Heart right ventricle (tissue), 16 donors: ENCODE measurements at regions of chr17 and their contacts with region 1.

Region 1: DNA sequence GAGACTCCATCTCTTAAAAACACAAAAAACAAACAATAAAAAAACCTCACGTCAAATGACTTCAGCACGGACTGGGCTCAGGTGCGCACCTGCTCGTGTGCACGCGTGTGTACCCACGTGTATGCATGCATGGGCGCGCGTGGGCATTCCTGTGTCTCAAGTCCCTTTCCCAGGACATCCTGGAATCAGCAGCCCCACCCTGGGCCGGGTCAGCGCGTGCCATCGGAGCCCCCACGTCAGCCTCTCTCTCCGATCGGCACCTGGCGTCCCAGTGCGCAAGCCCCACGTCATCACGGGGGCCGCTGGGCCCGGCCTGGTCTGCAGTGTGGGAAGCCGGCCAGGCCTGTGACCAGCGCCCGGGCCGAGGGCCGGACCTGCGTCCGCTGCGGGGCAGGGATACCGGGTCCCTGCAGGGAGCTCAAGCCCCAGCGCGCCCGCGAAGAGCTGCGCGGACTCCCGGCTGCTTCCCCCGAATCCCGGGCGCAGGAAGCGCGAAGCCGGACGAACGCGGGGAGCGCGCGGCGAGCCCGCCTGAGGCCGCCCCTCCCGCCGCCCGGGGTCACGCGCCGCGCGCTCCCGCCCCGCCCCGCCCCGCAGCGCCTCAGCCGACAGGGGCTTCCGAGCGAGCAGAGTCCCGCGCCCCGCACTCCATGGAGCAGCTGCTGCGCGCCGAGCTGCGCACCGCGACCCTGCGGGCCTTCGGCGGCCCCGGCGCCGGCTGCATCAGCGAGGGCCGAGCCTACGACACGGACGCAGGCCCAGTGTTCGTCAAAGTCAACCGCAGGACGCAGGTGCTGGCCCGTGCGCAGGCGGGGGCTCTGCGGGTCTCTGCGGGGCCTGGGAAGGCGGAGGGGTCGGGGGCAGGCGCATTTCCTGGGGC is at the start of gene FN3K:
- DNase-seq: peak; percentile 71 to 75
- ATAC-seq: peak; percentile 38 to 89 (median 60)
- H3K4me3 ChIP-seq: peak within 1 kb of the TSS; percentile 62 to 94 (median 81)
- H3K27ac ChIP-seq: peak within 1 kb of the TSS; percentile 76 to 96 (median 91)
- H3K4me1 ChIP-seq: peaks cover 0 to 37% (median 16%) of the 10 kb centered on the region in 9 donors
- H3K27me3 ChIP-seq: no peaks in the 10 kb centered on the region
- CTCF ChIP-seq: no peak
- total RNA-seq, gene FN3K: 72.4 to 115 (median 92.4) TPM

Region 2: GRCh38 chr17:82716203-82717010 is 18.8 kb before region 1 on chr17 and contains the start of gene FN3KRP:
- intact Hi-C with region 1: loop called in 1 of 10 experiments (anchors 1 kb)
- DNase-seq: peak; percentile 89 to 91
- ATAC-seq: peak; percentile 91 to 99 (median 97)
- H3K4me3 ChIP-seq: peak within 1 kb of the TSS; percentile 63 to 97 (median 94)
- H3K27ac ChIP-seq: peak within 1 kb of the TSS in 9 of 10 donors; percentile 39 to 87 (median 77)
- H3K4me1 ChIP-seq: peaks cover 3 to 21% (median 17%) of the 10 kb centered on the region in 9 donors
- H3K27me3 ChIP-seq: no peaks in the 10 kb centered on the region
- CTCF ChIP-seq: no peak
- total RNA-seq, gene FN3KRP: 10.3 to 18.7 (median 14.7) TPM

Region 3: GRCh38 chr17:82775001-82775823 is 40.0 kb after region 1 on chr17:
- intact Hi-C with region 1: no loop called
- DNase-seq: peak; percentile 37 to 74
- ATAC-seq: peak; percentile 23 to 69 (median 54)
- H3K4me3 ChIP-seq: peak overlapping the region in 3 of 10 donors; percentile 12 to 29 (median 24)
- H3K27ac ChIP-seq: peak overlapping the region in 1 of 10 donors; percentile 10
- H3K4me1 ChIP-seq: peaks cover 0 to 13% (median 0%) of the 10 kb centered on the region in 9 donors
- H3K27me3 ChIP-seq: no peaks in the 10 kb centered on the region
- CTCF ChIP-seq: peak; percentile 75 to 92 (median 89)

Region 4: GRCh38 chr17:82823004-82823403 is 87.8 kb after region 1 on chr17:
- intact Hi-C with region 1: no loop called
- DNase-seq: no peak
- ATAC-seq: peak in 5 of 8 donors; percentile 52 to 71 (median 55)
- H3K4me3 ChIP-seq: no peak overlapping the region
- H3K27ac ChIP-seq: peak overlapping the region in 3 of 10 donors; percentile 14 to 65 (median 28)
- H3K4me1 ChIP-seq: peaks cover 0 to 12% (median 0%) of the 10 kb centered on the region in 9 donors
- H3K27me3 ChIP-seq: no peaks in the 10 kb centered on the region
- CTCF ChIP-seq: peak in 6 of 9 donors; percentile 8 to 30 (median 25)